Psoas muscle (tissue), 8 donors: ENCODE measurements at regions of chr1 and their contacts with region 1.

Region 1: DNA sequence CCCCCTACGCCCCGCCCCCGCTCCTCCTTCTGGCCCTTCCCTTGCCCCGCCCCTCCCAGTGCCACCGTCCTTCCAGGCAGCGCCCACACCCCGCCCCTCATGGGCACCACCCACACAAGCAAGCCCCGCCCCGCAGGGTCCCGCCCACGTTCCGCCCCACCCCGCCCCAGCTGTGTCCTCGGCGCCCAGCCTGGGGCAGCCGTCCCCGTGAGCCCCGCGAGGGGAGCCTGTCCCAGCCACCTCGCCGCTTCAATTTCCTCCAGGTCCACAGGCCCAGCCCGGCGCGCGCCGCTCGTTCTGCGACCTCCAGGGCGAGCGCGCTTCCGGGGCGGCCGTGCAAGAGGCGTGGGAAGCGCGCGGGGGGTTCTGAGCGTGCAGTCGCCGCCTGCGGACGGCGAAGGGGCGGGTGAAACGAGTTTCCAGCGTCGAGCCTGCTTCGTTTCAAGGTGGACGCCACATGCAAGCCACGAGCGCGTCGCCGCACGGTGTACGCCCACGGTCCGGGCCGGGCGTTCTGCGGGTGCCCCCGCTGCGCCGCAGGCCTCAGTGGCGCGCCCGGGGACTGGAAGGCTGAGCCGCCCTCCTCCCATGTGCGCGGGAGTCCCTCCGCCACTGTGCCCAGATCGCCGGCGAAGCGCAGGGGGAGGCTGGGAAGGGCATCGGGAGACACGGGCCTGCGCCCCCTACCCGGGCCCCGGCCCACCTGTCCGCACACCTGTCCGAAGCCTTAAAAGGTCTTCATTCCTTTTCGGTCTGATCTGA is 10.8 kb upstream of the FAAP20 start:
- DNase-seq: peak; percentile 98 to 99
- ATAC-seq: peak; percentile 90 to 93 (median 91)
- H3K4me3 ChIP-seq: peak overlapping the region; percentile 67
- H3K27ac ChIP-seq: peak overlapping the region; percentile 77
- H3K4me1 ChIP-seq: peaks cover 25% of the 10 kb centered on the region
- H3K27me3 ChIP-seq: no peaks in the 10 kb centered on the region
- CTCF ChIP-seq: no peak

Region 2: GRCh38 chr1:2314803-2315673 is 109.7 kb after region 1 on chr1:
- intact Hi-C with region 1: loop called in 1 of 2 experiments (anchors 5 kb)
- DNase-seq: peak; percentile 76 to 77
- ATAC-seq: peak in 3 of 4 donors; percentile 24 to 45 (median 41)
- H3K4me3 ChIP-seq: peak overlapping the region; percentile 69
- H3K27ac ChIP-seq: peak overlapping the region; percentile 74
- H3K4me1 ChIP-seq: peaks cover 16% of the 10 kb centered on the region
- H3K27me3 ChIP-seq: peaks cover 0 to 28% (median 3%) of the 10 kb centered on the region in 3 donors
- CTCF ChIP-seq: peak; percentile 94